Heart left ventricle (tissue), 16 donors: ENCODE measurements at regions of chr5 and their contacts with region 1.

Region 1: GRCh38 chr5:67693956-67694809 is 497.6 kb upstream of the CD180 start:
- DNase-seq: peak; percentile 49 to 84 (median 65)
- ATAC-seq: peak; percentile 96 to 98 (median 98)
- H3K4me3 ChIP-seq: no peak overlapping the region
- H3K27ac ChIP-seq: peak overlapping the region; percentile 38 to 93 (median 78)
- H3K4me1 ChIP-seq: peaks cover 0 to 20% (median 9%) of the 10 kb centered on the region in 12 donors
- H3K27me3 ChIP-seq: no peaks in the 10 kb centered on the region
- CTCF ChIP-seq: no peak
- POLR2A ChIP-seq: no peak

Region 2: GRCh38 chr5:67493676-67494075 is 200.5 kb before region 1 on chr5:
- intact Hi-C with region 1: loop called in 1 of 10 experiments (anchors 5 kb)
- DNase-seq: peak; percentile 32 to 60 (median 43)
- ATAC-seq: peak; percentile 91 to 96 (median 94)
- H3K4me3 ChIP-seq: no peak overlapping the region
- H3K27ac ChIP-seq: peak overlapping the region in 1 of 12 donors; percentile 63
- H3K4me1 ChIP-seq: peaks cover 0 to 9% (median 0%) of the 10 kb centered on the region in 12 donors
- H3K27me3 ChIP-seq: no peaks in the 10 kb centered on the region
- CTCF ChIP-seq: peak; percentile 20 to 62 (median 46)
- POLR2A ChIP-seq: no peak

Region 3: GRCh38 chr5:67648201-67648671 is 45.9 kb before region 1 on chr5:
- intact Hi-C with region 1: loop called in 1 of 10 experiments (anchors 5 kb)
- DNase-seq: peak; percentile 75 to 90 (median 85)
- ATAC-seq: peak; percentile 97 to 98 (median 98)
- H3K4me3 ChIP-seq: no peak overlapping the region
- H3K27ac ChIP-seq: peak overlapping the region in 9 of 12 donors; percentile 44 to 87 (median 68)
- H3K4me1 ChIP-seq: peaks cover 0 to 38% (median 12%) of the 10 kb centered on the region in 12 donors
- H3K27me3 ChIP-seq: no peaks in the 10 kb centered on the region
- CTCF ChIP-seq: no peak
- POLR2A ChIP-seq: no peak

Region 4: DNA sequence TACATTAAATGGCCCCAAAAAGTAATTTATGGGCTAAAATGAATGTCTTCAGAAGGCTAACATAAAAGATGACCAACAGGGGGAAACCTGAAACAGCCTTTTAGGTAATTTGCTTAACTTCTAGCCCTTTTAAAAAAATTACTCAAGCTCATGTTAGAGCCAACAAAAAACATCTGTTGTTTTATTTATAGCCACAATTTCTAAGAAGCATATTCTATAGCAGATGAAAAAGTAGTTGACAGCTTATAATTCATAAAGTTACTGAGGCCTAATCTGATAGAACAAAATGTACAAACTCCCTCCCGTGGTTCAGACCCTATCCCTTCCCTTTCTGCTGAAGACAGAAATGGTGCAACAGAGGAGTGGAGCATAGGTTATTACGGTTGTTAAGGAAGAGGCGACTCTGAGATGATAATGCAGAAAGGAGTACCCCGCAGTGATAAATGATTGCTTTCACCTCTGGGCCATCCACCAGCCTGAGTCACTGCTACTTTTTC is 567.4 kb after region 1 on chr5:
- intact Hi-C with region 1: loop called in 2 of 10 experiments (anchors 5 to 10 kb)
- DNase-seq: no peak
- ATAC-seq: peak in 1 of 4 donors; percentile 18
- H3K4me3 ChIP-seq: no peak overlapping the region
- H3K27ac ChIP-seq: peak overlapping the region; percentile 9 to 85 (median 78)
- H3K4me1 ChIP-seq: peaks cover 11 to 96% (median 88%) of the 10 kb centered on the region in 12 donors
- H3K27me3 ChIP-seq: no peaks in the 10 kb centered on the region
- CTCF ChIP-seq: peak in 6 of 12 donors; percentile 9 to 41 (median 28)
- POLR2A ChIP-seq: no peak

Region 5: GRCh38 chr5:68272289-68272688 is 578.1 kb after region 1 on chr5:
- intact Hi-C with region 1: loop called in 2 of 10 experiments (anchors 5 to 10 kb)
- DNase-seq: no peak
- ATAC-seq: no peak
- H3K4me3 ChIP-seq: no peak overlapping the region
- H3K27ac ChIP-seq: peak overlapping the region in 9 of 12 donors; percentile 56 to 86 (median 65)
- H3K4me1 ChIP-seq: peaks cover 0 to 90% (median 69%) of the 10 kb centered on the region in 12 donors
- H3K27me3 ChIP-seq: no peaks in the 10 kb centered on the region
- CTCF ChIP-seq: peak in 11 of 12 donors; percentile 27 to 58 (median 42)
- POLR2A ChIP-seq: no peak